ENCODE measurements at regions of chr12 and their contacts with region 1.

Region 1: DNA sequence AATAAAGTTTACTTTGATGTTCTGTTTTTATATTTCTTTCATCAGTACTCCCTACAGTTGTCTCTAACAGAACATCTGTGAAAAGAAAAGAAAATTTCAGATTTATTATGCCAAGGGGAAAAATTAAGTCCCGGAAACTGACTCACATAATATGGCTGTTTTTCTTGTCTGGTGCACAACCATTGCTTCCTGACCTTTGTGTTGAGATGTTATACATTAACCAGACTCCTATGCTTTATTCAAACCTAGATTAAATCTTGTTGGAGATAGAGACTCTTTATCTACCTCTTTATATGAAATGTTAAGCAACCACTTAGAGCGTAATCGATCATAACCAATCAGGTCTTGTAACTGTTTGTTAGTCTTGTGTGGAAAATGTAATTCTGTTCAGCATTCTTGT is 37.6 kb upstream of the BICD1 start:
- DNase-seq: no peak
- ATAC-seq: no peak
- H3K4me3 ChIP-seq: no peak overlapping the region
- H3K27ac ChIP-seq: no peak overlapping the region
- H3K4me1 ChIP-seq: no peaks in the 10 kb centered on the region
- H3K27me3 ChIP-seq: no peaks in the 10 kb centered on the region
- CTCF ChIP-seq: no peak
- POLR2A ChIP-seq: no peak

Region 2: DNA sequence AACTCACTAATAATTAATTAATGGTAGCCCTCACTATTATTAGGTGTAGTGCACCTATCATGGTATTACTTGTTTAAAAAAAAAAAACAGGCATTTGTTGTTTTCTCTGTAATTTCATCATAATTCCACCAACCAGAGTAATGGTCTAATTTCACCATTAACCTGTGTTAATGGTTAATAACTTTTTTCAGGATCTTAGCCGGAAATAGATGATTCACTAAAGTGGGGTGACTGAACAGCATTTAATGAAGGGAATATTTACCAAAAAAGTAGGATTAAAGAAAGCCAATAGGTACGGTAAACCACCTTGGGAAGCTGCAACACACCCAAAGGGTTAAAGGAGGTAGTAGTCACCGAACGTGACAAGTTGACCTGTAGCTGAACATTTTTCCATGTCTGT is 396.6 kb before region 1 on chr12:
- intact Hi-C with region 1: loop called in 1 of 10 experiments (anchors 10 kb)
- DNase-seq: no peak
- ATAC-seq: no peak
- H3K4me3 ChIP-seq: no peak overlapping the region
- H3K27ac ChIP-seq: no peak overlapping the region
- H3K4me1 ChIP-seq: no peaks in the 10 kb centered on the region
- H3K27me3 ChIP-seq: no peaks in the 10 kb centered on the region
- CTCF ChIP-seq: no peak
- POLR2A ChIP-seq: no peak

Region 3: DNA sequence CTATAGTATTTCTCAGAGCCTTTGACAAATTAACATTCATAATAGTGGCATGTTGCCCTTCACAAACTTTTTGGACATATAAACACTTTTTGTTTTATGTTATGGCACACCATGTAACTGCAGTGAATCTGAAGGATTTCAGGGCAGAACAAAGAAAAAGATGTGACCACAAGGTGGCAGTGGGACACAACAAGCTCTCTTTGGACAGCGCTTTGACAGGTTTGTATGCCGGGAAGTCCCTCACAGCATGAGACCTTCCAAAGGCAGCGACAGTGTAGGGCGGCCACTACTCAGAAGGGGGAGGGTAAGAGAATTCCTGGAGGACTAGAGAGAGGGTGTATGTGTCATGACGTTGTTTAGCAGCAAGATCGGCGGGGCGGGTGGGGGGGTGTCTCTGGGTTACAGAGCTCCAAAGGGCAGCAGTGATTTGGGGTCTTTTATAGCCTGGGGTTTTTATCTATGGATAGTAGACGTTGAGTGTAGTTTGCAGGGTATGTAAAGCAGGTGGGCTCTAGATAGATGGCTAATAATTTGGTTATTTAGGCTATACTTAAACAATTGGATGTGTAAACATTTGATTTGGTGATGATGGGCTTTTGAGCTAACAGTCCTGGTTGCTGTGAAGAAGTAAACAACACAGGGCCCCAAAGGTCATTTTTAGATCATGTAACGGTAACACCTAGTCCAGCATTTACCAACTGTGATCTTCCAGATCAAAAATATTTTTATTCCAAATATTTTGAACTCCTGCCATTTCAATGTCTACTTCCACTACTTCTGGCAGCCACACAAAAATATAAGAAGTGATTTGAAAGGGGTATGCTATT is 386.7 kb before region 1 on chr12:
- intact Hi-C with region 1: loop called in 4 of 10 experiments (anchors 5 to 10 kb)
- DNase-seq: peak in 4 of 5 donors; percentile 34 to 56 (median 43)
- ATAC-seq: peak; percentile 58 to 88 (median 78)
- H3K4me3 ChIP-seq: no peak overlapping the region
- H3K27ac ChIP-seq: no peak overlapping the region
- H3K4me1 ChIP-seq: peaks cover 0 to 11% (median 0%) of the 10 kb centered on the region in 12 donors
- H3K27me3 ChIP-seq: no peaks in the 10 kb centered on the region
- CTCF ChIP-seq: peak; percentile 48 to 73 (median 66)
- POLR2A ChIP-seq: no peak

Region 4: DNA sequence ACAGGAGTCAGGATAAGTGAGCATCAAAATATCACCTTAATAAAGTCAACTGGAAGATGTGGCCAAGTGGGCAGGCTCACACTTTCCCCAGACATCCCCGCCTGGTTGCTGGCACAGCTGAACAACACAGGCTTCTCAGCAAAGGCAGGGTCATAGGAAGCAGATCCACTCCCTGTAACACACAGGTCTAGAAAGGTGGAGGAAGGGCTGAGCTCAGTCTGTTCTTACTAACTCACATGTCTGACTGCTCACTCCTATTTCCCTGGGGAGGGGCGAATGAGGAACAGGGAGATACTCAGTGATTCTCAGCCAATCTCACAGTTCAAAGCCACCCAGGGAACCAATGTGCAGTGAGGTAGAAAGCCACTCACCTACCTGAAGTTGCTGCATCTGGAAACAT is 295.2 kb before region 1 on chr12:
- intact Hi-C with region 1: no loop called
- DNase-seq: no peak
- ATAC-seq: peak in 1 of 4 donors; percentile 20
- H3K4me3 ChIP-seq: no peak overlapping the region
- H3K27ac ChIP-seq: no peak overlapping the region
- H3K4me1 ChIP-seq: peaks cover 0 to 11% (median 0%) of the 10 kb centered on the region in 12 donors
- H3K27me3 ChIP-seq: no peaks in the 10 kb centered on the region
- CTCF ChIP-seq: no peak
- POLR2A ChIP-seq: no peak

Region 5: GRCh38 chr12:32139064-32139421 is 70.0 kb after region 1 on chr12:
- intact Hi-C with region 1: no loop called
- DNase-seq: no peak
- ATAC-seq: peak in 3 of 4 donors; percentile 42 to 59 (median 57)
- H3K4me3 ChIP-seq: peak overlapping the region in 10 of 12 donors; percentile 27 to 59 (median 46)
- H3K27ac ChIP-seq: peak overlapping the region in 3 of 12 donors; percentile 28 to 52 (median 42)
- H3K4me1 ChIP-seq: peaks cover 0 to 24% (median 6%) of the 10 kb centered on the region in 12 donors
- H3K27me3 ChIP-seq: no peaks in the 10 kb centered on the region
- CTCF ChIP-seq: no peak
- POLR2A ChIP-seq: no peak

Region 6: DNA sequence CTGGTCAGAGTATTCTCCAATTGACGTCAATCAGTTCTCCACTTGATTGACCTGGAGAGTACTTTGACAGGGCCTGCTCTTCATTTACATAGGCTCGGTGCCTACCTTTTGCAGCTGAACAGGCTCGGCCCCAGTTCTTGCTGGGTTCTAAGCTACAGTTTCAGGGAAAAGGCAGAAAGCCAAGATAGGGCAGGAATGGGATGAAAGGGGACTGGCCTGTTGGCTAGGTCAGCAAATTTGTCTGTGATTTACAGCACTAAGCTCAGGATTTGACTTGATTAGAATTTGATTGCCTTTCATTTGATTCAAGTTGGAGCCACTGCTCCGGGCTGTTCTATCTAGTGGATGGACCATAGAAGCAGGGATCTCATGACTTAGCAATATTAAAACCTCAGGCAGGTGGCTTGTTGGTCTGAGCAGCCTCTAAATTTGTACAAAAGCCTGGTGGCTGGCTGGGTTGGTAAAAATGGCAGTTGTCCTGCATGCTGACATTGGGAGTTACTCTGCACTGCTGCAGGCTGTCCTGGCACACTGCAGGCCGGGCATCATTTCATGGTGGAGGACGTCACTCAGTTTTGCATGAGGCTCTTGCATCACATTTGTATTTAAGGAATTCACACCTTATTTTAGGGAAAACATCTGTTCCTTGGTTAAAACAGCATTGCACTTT is 109.4 kb after region 1 on chr12:
- intact Hi-C with region 1: loop called in 1 of 10 experiments (anchors 10 kb)
- DNase-seq: no peak
- ATAC-seq: no peak
- H3K4me3 ChIP-seq: no peak overlapping the region
- H3K27ac ChIP-seq: no peak overlapping the region
- H3K4me1 ChIP-seq: peaks cover 0 to 9% (median 0%) of the 10 kb centered on the region in 12 donors
- H3K27me3 ChIP-seq: no peaks in the 10 kb centered on the region
- CTCF ChIP-seq: no peak
- POLR2A ChIP-seq: no peak

Measured in heart left ventricle (tissue), 16 donors.